Common myeloid progenitor, CD34-positive (primary cell): ENCODE measurements at regions of chr18 and their contacts with region 1.

Region 1: GRCh38 chr18:63567276-63567675 is 19.9 kb upstream of the SERPINB13 start:
- DNase-seq: no peak
- H3K4me3 ChIP-seq: no peak overlapping the region
- H3K27ac ChIP-seq: no peak overlapping the region
- H3K4me1 ChIP-seq: no peaks in the 10 kb centered on the region
- H3K27me3 ChIP-seq: no peaks in the 10 kb centered on the region

Region 2: DNA sequence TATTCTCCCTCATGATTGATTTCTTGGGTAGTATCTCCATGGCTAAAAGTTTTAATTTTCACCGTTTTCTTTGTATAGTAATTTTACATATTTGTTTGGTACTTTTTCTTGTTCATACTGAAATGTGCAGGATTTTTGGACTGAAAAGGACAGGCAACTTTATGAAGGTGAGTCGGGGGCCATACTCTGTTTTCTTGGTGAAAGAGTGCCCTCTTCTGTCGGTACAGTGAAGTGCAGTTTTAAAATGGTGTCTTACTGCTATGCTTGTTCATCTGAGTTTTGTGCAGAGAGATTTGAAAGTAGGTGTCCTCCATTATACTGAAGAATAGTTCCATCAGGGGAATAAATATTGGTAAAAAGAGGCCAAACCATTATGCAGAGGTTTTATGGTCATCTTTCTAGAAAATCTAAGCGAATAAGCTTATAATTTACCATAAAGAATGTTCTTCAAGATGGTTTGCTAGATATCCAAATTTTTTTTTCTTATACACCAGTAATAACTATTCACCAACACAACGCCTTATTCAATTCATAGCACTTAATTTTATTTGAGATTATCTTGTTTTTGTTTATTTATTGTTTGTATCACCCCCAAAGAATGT is 11.2 kb after region 1 on chr18:
- CTCF ChIA-PET with region 1: interaction called, 15 read pairs
- POLR2A ChIA-PET with region 1: no interaction called
- DNase-seq: peak; percentile 53 to 67 (median 64)
- H3K4me3 ChIP-seq: no peak overlapping the region
- H3K27ac ChIP-seq: no peak overlapping the region
- H3K4me1 ChIP-seq: no peaks in the 10 kb centered on the region
- H3K27me3 ChIP-seq: no peaks in the 10 kb centered on the region

Region 3: DNA sequence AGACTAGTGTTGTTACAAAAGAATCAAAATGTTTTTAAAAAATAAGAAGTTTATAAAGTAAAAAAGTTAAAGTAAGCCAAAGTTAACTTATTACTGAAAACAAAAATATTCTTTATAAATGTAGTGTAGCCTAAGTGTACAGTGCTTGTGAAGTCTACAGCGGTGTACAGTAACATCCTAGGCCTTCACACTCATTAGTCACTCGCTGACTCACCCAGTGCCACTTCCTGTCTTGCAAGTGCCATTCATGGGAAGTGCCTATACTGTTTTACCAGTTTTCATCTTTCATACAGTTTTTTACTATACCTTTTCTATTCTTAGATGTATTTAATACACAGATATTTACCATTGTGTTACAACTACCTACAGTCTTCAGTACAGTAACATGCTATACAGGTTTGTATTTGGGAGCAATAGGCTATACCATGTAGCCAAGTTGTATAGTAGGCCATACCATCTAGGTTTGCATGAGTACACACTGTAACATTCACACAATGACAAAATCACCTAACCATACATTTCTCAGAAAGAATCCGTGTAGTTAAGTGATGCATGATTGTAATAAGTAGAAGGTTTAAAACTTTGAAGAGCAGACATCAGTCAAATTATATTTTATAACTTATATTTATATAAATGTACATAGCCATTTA is 221.3 kb after region 1 on chr18:
- CTCF ChIA-PET with region 1: no interaction called
- POLR2A ChIA-PET with region 1: no interaction called
- DNase-seq: peak; percentile 52 to 86 (median 84)
- H3K4me3 ChIP-seq: no peak overlapping the region
- H3K27ac ChIP-seq: no peak overlapping the region
- H3K4me1 ChIP-seq: no peaks in the 10 kb centered on the region
- H3K27me3 ChIP-seq: no peaks in the 10 kb centered on the region